Gastrocnemius medialis (tissue), 4 donors: ENCODE measurements at regions of chr5 and their contacts with region 1.

Region 1: GRCh38 chr5:10353241-10354047 is at the start of gene MARCHF6:
- DNase-seq: peak; percentile 93 to 94
- ATAC-seq: peak; percentile 85 to 88
- H3K4me3 ChIP-seq: peak within 1 kb of the TSS; percentile 79 to 99 (median 83)
- H3K27ac ChIP-seq: peak within 1 kb of the TSS; percentile 97 to 100 (median 98)
- H3K4me1 ChIP-seq: peaks cover 37 to 43% of the 10 kb centered on the region in 2 donors
- H3K27me3 ChIP-seq: no peaks in the 10 kb centered on the region
- CTCF ChIP-seq: peak in 1 of 5 experiments; percentile 8
- POLR2A ChIP-seq: peak; percentile 97
- total RNA-seq, gene MARCHF6: 139 to 173 (median 146) TPM

Region 2: DNA sequence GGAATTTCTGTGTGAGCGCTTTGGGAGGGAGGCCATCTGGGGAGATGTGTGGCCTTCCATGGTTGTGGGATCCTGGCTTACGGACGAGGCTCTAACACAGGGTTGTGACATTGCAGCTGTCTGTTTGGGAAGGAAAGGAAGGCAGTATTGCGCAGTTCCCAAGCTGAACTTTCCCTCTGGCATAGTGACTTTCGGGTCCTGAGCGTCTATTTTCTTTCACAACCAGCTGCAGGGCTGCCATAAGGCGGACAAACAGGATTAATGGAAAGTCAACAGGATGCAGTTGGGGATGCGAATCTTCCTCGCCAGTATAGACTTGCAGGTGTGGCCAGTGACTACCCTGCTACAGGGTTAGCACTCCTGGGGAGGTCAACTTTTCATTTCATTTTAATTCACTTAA is 77.5 kb before region 1 on chr5:
- in situ Hi-C with region 1: no loop called
- intact Hi-C with region 1: no loop called
- DNase-seq: no peak
- ATAC-seq: peak in 1 of 2 donors; percentile 60
- H3K4me3 ChIP-seq: no peak overlapping the region
- H3K27ac ChIP-seq: no peak overlapping the region
- H3K4me1 ChIP-seq: no peaks in the 10 kb centered on the region
- H3K27me3 ChIP-seq: no peaks in the 10 kb centered on the region
- CTCF ChIP-seq: no peak
- POLR2A ChIP-seq: no peak

Region 3: GRCh38 chr5:10317825-10318682 is 35.4 kb before region 1 on chr5:
- in situ Hi-C with region 1: no loop called
- intact Hi-C with region 1: loop called (anchors 5 kb)
- DNase-seq: peak in 1 of 2 donors; percentile 55
- ATAC-seq: peak; percentile 48 to 64
- H3K4me3 ChIP-seq: no peak overlapping the region
- H3K27ac ChIP-seq: peak overlapping the region; percentile 70 to 78 (median 74)
- H3K4me1 ChIP-seq: peaks cover 21 to 27% of the 10 kb centered on the region in 2 donors
- H3K27me3 ChIP-seq: no peaks in the 10 kb centered on the region
- CTCF ChIP-seq: no peak
- POLR2A ChIP-seq: no peak

Region 4: DNA sequence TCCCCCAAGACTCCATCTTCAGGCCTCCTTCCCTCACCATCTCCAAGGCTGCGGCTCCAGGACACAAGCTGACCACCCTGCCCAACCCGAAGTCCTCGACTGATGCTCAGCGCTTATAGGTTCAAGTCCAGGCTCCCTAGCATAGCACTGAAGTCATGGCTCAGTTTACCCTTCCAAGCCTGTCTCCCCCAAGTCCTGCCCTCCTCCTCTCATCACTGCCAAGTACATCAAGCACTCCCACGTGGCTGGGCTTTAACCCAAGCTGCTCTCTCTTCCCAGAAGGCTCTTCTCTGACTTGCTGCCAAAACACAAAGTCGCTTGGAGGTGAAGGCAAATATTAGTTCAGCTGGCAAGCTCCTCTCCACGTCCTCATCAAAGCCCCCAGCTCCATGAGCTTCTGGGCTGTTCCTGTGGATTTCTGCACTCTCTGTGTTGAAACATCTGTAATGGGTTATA is 22.1 kb before region 1 on chr5:
- in situ Hi-C with region 1: no loop called
- intact Hi-C with region 1: loop called (anchors 2 kb)
- DNase-seq: peak in 1 of 2 donors; percentile 44
- ATAC-seq: no peak
- H3K4me3 ChIP-seq: no peak overlapping the region
- H3K27ac ChIP-seq: peak overlapping the region; percentile 73 to 86 (median 78)
- H3K4me1 ChIP-seq: peaks cover 34% of the 10 kb centered on the region in 2 donors
- H3K27me3 ChIP-seq: no peaks in the 10 kb centered on the region
- CTCF ChIP-seq: no peak
- POLR2A ChIP-seq: no peak

Region 5: GRCh38 chr5:10441083-10441991 is 87.9 kb after region 1 on chr5 and contains the start of gene ROPN1L:
- in situ Hi-C with region 1: no loop called
- intact Hi-C with region 1: loop called (anchors 5 kb)
- DNase-seq: peak; percentile 72 to 76
- ATAC-seq: peak; percentile 84 to 89
- H3K4me3 ChIP-seq: peak within 1 kb of the TSS; percentile 65 to 89 (median 70)
- H3K27ac ChIP-seq: peak within 1 kb of the TSS; percentile 76 to 87 (median 79)
- H3K4me1 ChIP-seq: peaks cover 26 to 29% of the 10 kb centered on the region in 2 donors
- H3K27me3 ChIP-seq: no peaks in the 10 kb centered on the region
- CTCF ChIP-seq: no peak
- POLR2A ChIP-seq: peak; percentile 55 to 73
- total RNA-seq, gene ROPN1L: 0.46 TPM in 1 of 4 donors, not detected in the others

Region 6: DNA sequence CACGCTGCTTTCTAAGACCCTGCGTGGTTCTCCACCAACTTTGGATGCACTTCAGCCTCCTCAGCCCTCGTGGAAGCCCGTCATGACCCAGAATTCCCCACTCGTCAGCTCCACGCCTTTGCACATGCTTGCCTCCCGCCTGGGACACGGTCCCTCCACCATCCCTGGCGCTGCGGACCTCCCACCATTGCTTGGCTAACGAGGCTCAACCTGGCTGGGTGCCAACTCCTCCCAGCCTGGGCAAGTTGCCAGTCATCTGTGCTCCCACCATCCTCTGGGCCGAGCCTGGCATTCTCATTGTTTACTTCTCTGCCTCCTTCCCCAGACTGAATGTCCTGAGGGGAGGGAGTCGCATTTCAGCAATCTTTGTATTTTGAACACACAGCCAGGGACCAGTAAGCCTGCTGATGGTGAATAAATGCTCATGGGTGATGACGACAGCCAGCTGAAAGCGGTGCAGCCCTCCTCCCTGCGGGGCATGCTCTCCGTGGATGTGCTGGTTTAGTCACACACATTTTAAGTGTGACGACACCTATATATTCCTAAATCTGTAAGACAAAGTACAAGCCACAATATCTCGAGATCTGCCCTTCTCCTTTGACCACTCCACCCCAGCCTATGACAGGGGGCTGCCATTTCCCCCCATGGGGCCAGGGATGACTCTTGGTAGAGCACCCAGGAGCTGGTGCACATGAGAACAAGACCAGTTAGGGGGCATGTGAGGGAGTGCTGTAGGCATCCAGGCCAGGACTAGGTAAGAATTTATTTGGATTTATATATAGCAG is 248.0 kb after region 1 on chr5:
- in situ Hi-C with region 1: no loop called
- intact Hi-C with region 1: loop called (anchors 5 kb)
- DNase-seq: peak; percentile 85 to 86
- ATAC-seq: peak; percentile 84
- H3K4me3 ChIP-seq: peak overlapping the region; percentile 8 to 46 (median 26)
- H3K27ac ChIP-seq: peak overlapping the region; percentile 80 to 92 (median 86)
- H3K4me1 ChIP-seq: peaks cover 34 to 37% of the 10 kb centered on the region in 2 donors
- H3K27me3 ChIP-seq: no peaks in the 10 kb centered on the region
- CTCF ChIP-seq: no peak
- POLR2A ChIP-seq: peak in 1 of 2 donors; percentile 43